ENCODE measurements at regions of chr19 and their contacts with region 1.

Region 1: DNA sequence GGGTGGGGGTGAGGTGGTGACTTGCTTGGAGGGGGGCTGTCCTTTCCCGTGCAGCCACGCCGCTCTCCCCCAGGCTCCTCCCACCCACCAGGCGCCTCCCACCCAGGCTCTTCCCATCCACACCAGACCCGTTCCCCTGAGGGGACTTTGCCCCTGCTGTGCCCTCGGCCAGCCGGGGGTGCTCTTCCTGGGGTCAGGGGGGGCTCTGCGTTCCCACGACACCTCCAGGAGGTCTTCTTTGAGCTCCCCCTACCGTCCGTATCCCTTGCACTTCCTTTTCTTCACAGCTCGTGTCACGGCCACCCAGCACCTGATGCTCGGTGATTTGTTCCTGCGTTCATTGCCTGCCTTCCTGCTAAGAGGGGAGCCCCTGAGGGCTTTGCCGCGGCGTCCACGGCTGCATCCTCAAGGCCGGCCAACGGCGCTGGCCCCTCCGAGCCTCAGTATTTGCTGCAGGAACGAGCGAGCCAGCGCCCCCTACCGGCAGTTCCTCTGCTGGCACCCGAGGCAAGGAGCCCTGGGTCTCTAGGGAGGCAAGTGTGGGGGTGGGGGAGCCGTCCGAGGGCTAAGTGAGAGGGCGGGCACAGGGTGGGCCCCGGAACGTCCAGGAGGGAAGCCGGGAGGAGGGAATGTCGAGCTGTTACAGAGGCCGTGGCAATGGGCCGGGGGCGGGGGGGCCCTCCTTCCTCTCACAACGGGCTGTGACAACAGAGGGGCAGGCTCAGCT is 11.8 kb downstream of the LRRC4B start:
- DNase-seq: peak; percentile 92
- H3K4me3 Mint-ChIP-seq: peak overlapping the region; percentile 67
- H3K27ac Mint-ChIP-seq: no peak overlapping the region
- H3K4me1 Mint-ChIP-seq: peaks cover 8% of the 10 kb centered on the region
- H3K27me3 Mint-ChIP-seq: peaks cover 88% of the 10 kb centered on the region
- CTCF ChIP-seq: peak; percentile 96

Region 2: GRCh38 chr19:50357178-50358100 is 199.0 kb before region 1 on chr19:
- CTCF ChIA-PET with region 1: interaction called, 10 read pairs
- intact Hi-C with region 1: no loop called
- DNase-seq: peak; percentile 82
- H3K4me3 Mint-ChIP-seq: peak overlapping the region; percentile 76
- H3K27ac Mint-ChIP-seq: peak overlapping the region; percentile 2
- H3K4me1 Mint-ChIP-seq: no peaks in the 10 kb centered on the region
- H3K27me3 Mint-ChIP-seq: peaks cover 36% of the 10 kb centered on the region
- CTCF ChIP-seq: peak; percentile 98

Region 3: GRCh38 chr19:50514346-50515167 is 41.9 kb before region 1 on chr19:
- CTCF ChIA-PET with region 1: no interaction called
- intact Hi-C with region 1: no loop called
- DNase-seq: no peak
- H3K4me3 Mint-ChIP-seq: no peak overlapping the region
- H3K27ac Mint-ChIP-seq: peak overlapping the region; percentile 44
- H3K4me1 Mint-ChIP-seq: peaks cover 13% of the 10 kb centered on the region
- H3K27me3 Mint-ChIP-seq: peaks cover 57% of the 10 kb centered on the region
- CTCF ChIP-seq: no peak

Region 4: DNA sequence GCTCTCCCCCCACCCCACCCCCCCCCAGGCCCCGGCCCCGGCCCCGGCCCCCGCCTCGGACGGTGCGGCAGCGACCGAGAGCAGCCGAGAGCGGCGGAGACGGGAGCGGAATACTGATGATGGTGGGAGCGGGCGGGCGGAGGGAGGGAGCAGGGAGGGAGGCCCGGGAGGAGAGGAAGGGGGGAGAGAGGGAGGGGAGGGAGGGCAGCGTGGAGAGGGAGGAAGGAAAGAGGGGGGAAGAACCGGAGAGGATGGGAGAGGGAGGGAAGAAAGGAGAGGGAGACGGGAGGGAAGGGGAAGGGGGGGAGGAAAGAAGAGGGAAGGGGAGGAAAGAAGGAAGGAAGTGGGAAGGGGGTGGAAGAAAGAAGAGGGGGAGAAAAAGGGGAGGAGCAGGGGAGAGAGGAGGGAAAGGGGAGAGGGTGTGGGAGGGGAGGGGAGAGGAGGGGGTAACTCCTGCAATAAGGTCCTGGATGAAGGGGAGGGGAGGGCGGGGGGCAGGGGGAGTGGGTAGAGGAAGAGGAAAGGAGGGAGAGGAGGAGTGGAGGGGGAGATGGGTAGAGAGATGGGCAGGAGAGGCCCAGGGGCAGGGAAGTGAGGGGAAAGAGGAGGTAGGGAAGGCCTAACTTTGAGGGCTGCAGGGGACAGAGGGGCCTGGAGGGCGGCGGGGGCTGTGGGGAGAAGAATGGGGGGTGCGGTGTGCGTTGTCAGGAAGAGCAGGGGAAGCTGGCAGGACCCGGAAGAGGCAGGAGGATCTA is 12.1 kb after region 1 on chr19 and contains the start of gene LRRC4B:
- CTCF ChIA-PET with region 1: interaction called, 13 read pairs
- intact Hi-C with region 1: no loop called
- DNase-seq: no peak
- H3K4me3 Mint-ChIP-seq: no peak within 1 kb of the TSS
- H3K27ac Mint-ChIP-seq: no peak within 1 kb of the TSS
- H3K4me1 Mint-ChIP-seq: no peaks in the 10 kb centered on the region
- H3K27me3 Mint-ChIP-seq: peaks cover 98% of the 10 kb centered on the region
- CTCF ChIP-seq: no peak
- total RNA-seq, gene LRRC4B: not detected in 2 replicates

Region 5: GRCh38 chr19:50649433-50650391 is 93.3 kb after region 1 on chr19 and contains the start of gene C19orf81:
- CTCF ChIA-PET with region 1: no interaction called
- intact Hi-C with region 1: no loop called
- DNase-seq: peak; percentile 22
- H3K4me3 Mint-ChIP-seq: no peak within 1 kb of the TSS
- H3K27ac Mint-ChIP-seq: no peak within 1 kb of the TSS
- H3K4me1 Mint-ChIP-seq: no peaks in the 10 kb centered on the region
- H3K27me3 Mint-ChIP-seq: peaks cover 54% of the 10 kb centered on the region
- CTCF ChIP-seq: no peak
- total RNA-seq, gene C19orf81: not detected in 2 replicates

Measured in Calu3 (cell line).